H1 (cell line): ENCODE measurements at regions of chr3 and their contacts with region 1.

Region 1: DNA sequence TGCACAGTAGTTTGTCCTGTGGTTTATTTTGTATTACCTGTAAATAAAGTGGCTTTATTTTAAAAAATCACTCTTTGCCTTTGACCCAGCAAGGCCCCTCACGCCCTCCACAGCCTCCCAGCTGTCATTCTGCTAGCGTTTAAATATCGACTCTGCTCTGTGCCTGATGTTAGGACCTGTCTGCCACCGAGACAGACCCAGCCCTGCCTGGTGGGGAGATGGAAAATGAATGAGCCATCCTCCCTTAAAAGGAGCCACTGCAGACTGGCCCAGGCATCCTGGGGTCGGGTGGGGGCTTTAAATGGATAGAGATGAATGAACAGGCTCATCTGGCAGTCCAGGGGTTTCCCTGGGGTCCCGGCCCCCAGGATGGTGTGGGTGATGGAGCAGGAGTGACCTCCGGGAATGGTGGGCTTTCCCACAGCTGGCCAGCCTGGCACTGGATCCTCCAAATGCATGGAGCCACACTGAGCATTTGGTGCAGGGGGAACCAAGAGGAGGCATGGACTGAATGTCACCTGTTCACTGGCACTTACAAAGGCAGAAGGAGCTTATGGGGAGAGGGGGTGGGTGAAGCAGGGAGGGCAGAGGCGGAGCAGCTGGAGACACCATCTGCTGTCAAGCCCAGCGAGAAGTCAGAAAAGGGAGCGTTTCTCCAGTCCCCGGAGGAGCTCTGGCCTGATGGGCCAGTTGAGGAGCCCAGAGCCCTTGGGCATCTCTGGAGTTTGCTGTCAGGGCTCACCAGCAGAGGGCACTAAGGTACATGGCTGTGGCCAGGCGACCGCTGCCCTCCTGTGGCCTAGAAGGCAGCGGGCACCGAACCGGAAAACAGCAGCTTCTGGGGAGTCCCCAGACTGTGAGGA is 11.9 kb downstream of the GRM2 start:
- DNase-seq: peak; percentile 69 to 92
- H3K4me3 ChIP-seq: no peak overlapping the region
- H3K27ac ChIP-seq: no peak overlapping the region
- H3K4me1 ChIP-seq: no peaks in the 10 kb centered on the region; a peak in 1 of 7 replicates
- H3K27me3 ChIP-seq: no peaks in the 10 kb centered on the region
- CTCF ChIP-seq: peak in 2 of 3 experiments; percentile 99 to 100; a peak in 3 of 4 replicates
- EP300 ChIP-seq: no peak
- POLR2A ChIP-seq: no peak
- RAD21 ChIP-seq: peak; percentile 89 to 95

Region 2: GRCh38 chr3:51729042-51729633 is 10.4 kb after region 1 on chr3:
- CTCF ChIA-PET with region 1: interaction called, 15 read pairs
- POLR2A ChIA-PET with region 1: interaction called, 3 read pairs
- DNase-seq: no peak
- H3K4me3 ChIP-seq: no peak overlapping the region
- H3K27ac ChIP-seq: no peak overlapping the region
- H3K4me1 ChIP-seq: no peaks in the 10 kb centered on the region
- H3K27me3 ChIP-seq: no peaks in the 10 kb centered on the region
- CTCF ChIP-seq: no peak
- EP300 ChIP-seq: no peak
- POLR2A ChIP-seq: no peak
- RAD21 ChIP-seq: no peak

Region 3: DNA sequence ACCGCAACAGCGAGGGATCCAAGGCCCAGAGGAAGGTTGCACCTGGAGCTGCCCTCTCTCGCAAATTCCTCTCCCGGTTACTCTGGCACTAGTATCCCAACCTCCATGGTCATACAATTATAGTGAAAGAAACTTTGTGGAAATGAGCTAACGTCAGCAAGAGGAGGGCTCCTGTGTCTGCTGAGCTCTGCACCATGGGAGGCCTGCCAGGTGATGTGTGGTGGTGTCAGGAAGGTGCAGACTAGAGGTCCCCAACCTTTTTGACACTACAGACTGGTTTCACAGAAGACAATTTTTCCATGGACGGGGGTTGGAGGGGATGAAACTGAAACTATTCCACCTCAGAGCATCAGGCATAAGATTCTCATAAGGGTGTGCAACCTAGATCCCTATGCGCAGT is 73.4 kb after region 1 on chr3:
- CTCF ChIA-PET with region 1: interaction called, 108 read pairs
- POLR2A ChIA-PET with region 1: no interaction called
- DNase-seq: peak in 1 of 2 experiments; percentile 48
- H3K4me3 ChIP-seq: no peak overlapping the region
- H3K27ac ChIP-seq: no peak overlapping the region
- H3K4me1 ChIP-seq: peaks cover 5 to 19% (median 8%) of the 10 kb centered on the region in 4 experiments; a peak in 6 of 7 replicates
- H3K27me3 ChIP-seq: no peaks in the 10 kb centered on the region
- CTCF ChIP-seq: no peak
- EP300 ChIP-seq: no peak
- POLR2A ChIP-seq: no peak
- RAD21 ChIP-seq: no peak

Region 4: DNA sequence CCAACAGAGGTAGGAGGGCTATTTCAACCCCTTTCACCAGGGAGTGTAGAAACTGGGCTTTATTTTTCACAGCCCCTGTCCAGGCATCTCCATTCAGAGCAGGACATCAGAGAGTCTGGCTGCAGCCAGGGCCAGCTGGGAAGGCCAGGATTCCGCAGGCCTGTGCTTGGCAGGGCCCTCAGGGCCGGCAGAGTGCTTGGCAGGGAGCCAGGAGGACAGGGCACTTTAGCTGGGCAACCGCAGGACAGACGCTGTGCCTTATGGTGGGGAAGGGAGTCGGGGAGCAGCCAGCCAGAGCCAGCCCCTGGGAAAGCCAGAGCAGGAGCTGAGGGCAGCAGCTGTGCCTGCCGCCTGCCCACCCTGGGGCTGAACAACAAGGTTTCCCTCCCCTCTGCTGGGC is 94.8 kb after region 1 on chr3:
- CTCF ChIA-PET with region 1: interaction called, 41 read pairs
- POLR2A ChIA-PET with region 1: no interaction called
- DNase-seq: no peak
- H3K4me3 ChIP-seq: no peak overlapping the region
- H3K27ac ChIP-seq: no peak overlapping the region
- H3K4me1 ChIP-seq: no peaks in the 10 kb centered on the region
- H3K27me3 ChIP-seq: no peaks in the 10 kb centered on the region
- CTCF ChIP-seq: no peak
- EP300 ChIP-seq: no peak
- POLR2A ChIP-seq: no peak
- RAD21 ChIP-seq: no peak

Region 5: GRCh38 chr3:51874889-51875288 is 156.1 kb after region 1 on chr3:
- CTCF ChIA-PET with region 1: no interaction called
- POLR2A ChIA-PET with region 1: no interaction called
- DNase-seq: no peak
- H3K4me3 ChIP-seq: no peak overlapping the region
- H3K27ac ChIP-seq: no peak overlapping the region
- H3K4me1 ChIP-seq: no peaks in the 10 kb centered on the region
- H3K27me3 ChIP-seq: no peaks in the 10 kb centered on the region
- CTCF ChIP-seq: no peak
- EP300 ChIP-seq: no peak
- POLR2A ChIP-seq: no peak
- RAD21 ChIP-seq: no peak